CD8-positive, alpha-beta T cell (primary cell): ENCODE measurements at regions of chr6 and their contacts with region 1.

Region 1: GRCh38 chr6:166999145-166999883 is at the start of gene CEP43:
- DNase-seq: peak; percentile 80 to 95 (median 87)
- ATAC-seq: peak; percentile 92
- H3K4me3 ChIP-seq: peak within 1 kb of the TSS; percentile 63 to 99
- H3K4me3 Mint-ChIP-seq: peak within 1 kb of the TSS; percentile 86
- H3K27ac ChIP-seq: peak within 1 kb of the TSS; percentile 28 to 43
- H3K27ac Mint-ChIP-seq: peak within 1 kb of the TSS; percentile 77
- H3K4me1 ChIP-seq: peaks cover 20% of the 10 kb centered on the region
- H3K4me1 Mint-ChIP-seq: peaks cover 28% of the 10 kb centered on the region
- H3K27me3 ChIP-seq: no peaks in the 10 kb centered on the region
- H3K27me3 Mint-ChIP-seq: no peaks in the 10 kb centered on the region
- CTCF ChIP-seq: no peak
- total RNA-seq, gene CEP43: 5.7 to 8.7 TPM

Region 2: GRCh38 chr6:166419286-166419685 is 580.0 kb before region 1 on chr6:
- CTCF ChIA-PET with region 1: no interaction called
- POLR2A ChIA-PET with region 1: no interaction called
- intact Hi-C with region 1: loop called in 1 of 2 experiments (anchors 5 kb)
- DNase-seq: peak in 8 of 9 experiments; percentile 50 to 82 (median 72)
- ATAC-seq: peak; percentile 35
- H3K4me3 ChIP-seq: no peak overlapping the region
- H3K4me3 Mint-ChIP-seq: peak overlapping the region; percentile 50
- H3K27ac ChIP-seq: peak overlapping the region; percentile 15 to 58
- H3K27ac Mint-ChIP-seq: peak overlapping the region; percentile 92
- H3K4me1 ChIP-seq: peaks cover 62% of the 10 kb centered on the region
- H3K4me1 Mint-ChIP-seq: peaks cover 75% of the 10 kb centered on the region
- H3K27me3 ChIP-seq: no peaks in the 10 kb centered on the region
- H3K27me3 Mint-ChIP-seq: no peaks in the 10 kb centered on the region
- CTCF ChIP-seq: no peak

Region 3: DNA sequence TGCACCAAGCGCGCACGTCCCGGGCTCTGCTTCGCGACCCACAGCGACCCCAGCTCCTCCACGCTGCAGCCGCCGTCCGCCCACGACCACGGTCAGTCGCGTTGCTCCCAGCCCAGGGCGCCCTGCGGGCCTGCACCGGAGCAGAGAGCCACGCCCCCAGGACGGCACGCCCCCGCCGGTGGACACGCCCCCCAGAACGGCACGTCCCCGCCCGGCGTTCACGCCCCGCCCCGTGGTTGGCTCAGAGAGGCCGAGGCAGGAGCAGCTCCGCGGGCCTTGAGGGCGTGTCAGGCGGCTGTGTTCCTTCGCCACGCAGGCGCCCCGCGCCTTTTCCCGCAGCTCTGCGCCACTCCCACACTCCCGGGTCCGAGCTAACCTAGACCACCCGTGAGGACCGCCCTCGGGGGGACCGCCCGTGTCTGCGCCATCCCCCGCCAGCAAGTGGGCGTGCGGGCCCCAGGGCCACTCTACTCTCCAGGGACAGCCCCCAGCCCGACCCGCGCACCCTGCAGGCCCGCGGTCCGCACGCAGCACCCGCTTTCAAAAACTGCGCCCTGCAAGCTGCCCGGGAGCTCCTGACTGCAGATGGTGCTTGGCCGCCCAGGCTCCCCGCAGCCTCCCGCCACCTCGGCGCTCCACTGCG is 42.7 kb before region 1 on chr6 and contains the start of gene RNASET2:
- CTCF ChIA-PET with region 1: interaction called, 3 read pairs
- POLR2A ChIA-PET with region 1: interaction called, 16 read pairs
- intact Hi-C with region 1: loop called (anchors 1 kb)
- DNase-seq: peak; percentile 96 to 100 (median 99)
- ATAC-seq: peak; percentile 87
- H3K4me3 ChIP-seq: peak within 1 kb of the TSS; percentile 74 to 75
- H3K4me3 Mint-ChIP-seq: peak within 1 kb of the TSS; percentile 93
- H3K27ac ChIP-seq: peak within 1 kb of the TSS; percentile 81 to 86
- H3K27ac Mint-ChIP-seq: peak within 1 kb of the TSS; percentile 98
- H3K4me1 ChIP-seq: peaks cover 68% of the 10 kb centered on the region
- H3K4me1 Mint-ChIP-seq: peaks cover 70% of the 10 kb centered on the region
- H3K27me3 ChIP-seq: no peaks in the 10 kb centered on the region
- H3K27me3 Mint-ChIP-seq: no peaks in the 10 kb centered on the region
- CTCF ChIP-seq: no peak
- total RNA-seq, gene RNASET2: 93.1 to 98.9 TPM

Region 4: GRCh38 chr6:167047554-167047953 is 48.2 kb after region 1 on chr6:
- CTCF ChIA-PET with region 1: no interaction called
- POLR2A ChIA-PET with region 1: no interaction called
- intact Hi-C with region 1: loop called in 1 of 2 experiments (anchors 5 kb)
- DNase-seq: peak in 6 of 9 experiments; percentile 22 to 59 (median 47)
- ATAC-seq: peak; percentile 80
- H3K4me3 ChIP-seq: peak overlapping the region in 1 of 2 experiments; percentile 3
- H3K4me3 Mint-ChIP-seq: peak overlapping the region; percentile 73
- H3K27ac ChIP-seq: no peak overlapping the region
- H3K27ac Mint-ChIP-seq: peak overlapping the region; percentile 62
- H3K4me1 ChIP-seq: peaks cover 12% of the 10 kb centered on the region
- H3K4me1 Mint-ChIP-seq: peaks cover 25% of the 10 kb centered on the region
- H3K27me3 ChIP-seq: no peaks in the 10 kb centered on the region
- H3K27me3 Mint-ChIP-seq: no peaks in the 10 kb centered on the region
- CTCF ChIP-seq: no peak

Region 5: DNA sequence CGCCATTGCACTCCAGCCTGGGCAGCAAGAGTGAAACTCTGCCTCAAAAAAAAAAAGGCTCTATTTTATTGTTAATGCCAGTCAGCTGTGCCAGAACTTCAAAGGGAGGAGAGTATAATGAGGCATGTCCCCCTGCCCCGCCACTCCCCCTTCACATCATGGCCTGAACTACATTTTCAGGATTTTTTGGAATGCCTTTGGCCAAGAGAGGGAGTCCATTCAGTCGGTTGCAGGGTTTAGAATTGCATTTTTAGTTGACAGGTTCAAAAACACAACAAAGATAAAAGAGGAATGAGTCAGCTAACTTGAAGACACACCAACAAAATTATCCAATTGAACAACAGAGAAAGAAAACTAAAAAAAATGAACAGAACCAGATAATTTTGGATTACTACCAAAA is 58.9 kb after region 1 on chr6:
- CTCF ChIA-PET with region 1: no interaction called
- POLR2A ChIA-PET with region 1: no interaction called
- intact Hi-C with region 1: no loop called
- DNase-seq: no peak
- ATAC-seq: no peak
- H3K4me3 ChIP-seq: no peak overlapping the region
- H3K4me3 Mint-ChIP-seq: no peak overlapping the region
- H3K27ac ChIP-seq: no peak overlapping the region
- H3K27ac Mint-ChIP-seq: no peak overlapping the region
- H3K4me1 ChIP-seq: peaks cover 8% of the 10 kb centered on the region
- H3K4me1 Mint-ChIP-seq: peaks cover 31% of the 10 kb centered on the region
- H3K27me3 ChIP-seq: no peaks in the 10 kb centered on the region
- H3K27me3 Mint-ChIP-seq: no peaks in the 10 kb centered on the region
- CTCF ChIP-seq: no peak

Region 6: GRCh38 chr6:167079853-167080297 is 80.6 kb after region 1 on chr6:
- CTCF ChIA-PET with region 1: no interaction called
- POLR2A ChIA-PET with region 1: no interaction called
- intact Hi-C with region 1: no loop called
- DNase-seq: peak in 4 of 9 experiments; percentile 27 to 63 (median 52)
- ATAC-seq: peak; percentile 89
- H3K4me3 ChIP-seq: no peak overlapping the region
- H3K4me3 Mint-ChIP-seq: no peak overlapping the region
- H3K27ac ChIP-seq: no peak overlapping the region
- H3K27ac Mint-ChIP-seq: no peak overlapping the region
- H3K4me1 ChIP-seq: no peaks in the 10 kb centered on the region
- H3K4me1 Mint-ChIP-seq: peaks cover 3% of the 10 kb centered on the region
- H3K27me3 ChIP-seq: no peaks in the 10 kb centered on the region
- H3K27me3 Mint-ChIP-seq: no peaks in the 10 kb centered on the region
- CTCF ChIP-seq: no peak

Region 7: GRCh38 chr6:167141667-167142432 is 142.5 kb after region 1 on chr6:
- CTCF ChIA-PET with region 1: interaction called, 14 read pairs
- POLR2A ChIA-PET with region 1: interaction called, 3 read pairs
- intact Hi-C with region 1: loop called (anchors 2 to 5 kb)
- DNase-seq: peak in 7 of 9 experiments; percentile 7 to 66 (median 41)
- ATAC-seq: peak; percentile 71
- H3K4me3 ChIP-seq: no peak overlapping the region
- H3K4me3 Mint-ChIP-seq: no peak overlapping the region
- H3K27ac ChIP-seq: no peak overlapping the region
- H3K27ac Mint-ChIP-seq: no peak overlapping the region
- H3K4me1 ChIP-seq: no peaks in the 10 kb centered on the region
- H3K4me1 Mint-ChIP-seq: peaks cover 16% of the 10 kb centered on the region
- H3K27me3 ChIP-seq: no peaks in the 10 kb centered on the region
- H3K27me3 Mint-ChIP-seq: peaks cover 8% of the 10 kb centered on the region
- CTCF ChIP-seq: peak; percentile 72

Region 8: GRCh38 chr6:167329014-167329413 is 329.7 kb after region 1 on chr6:
- CTCF ChIA-PET with region 1: no interaction called
- POLR2A ChIA-PET with region 1: no interaction called
- intact Hi-C with region 1: no loop called
- DNase-seq: no peak
- ATAC-seq: no peak
- H3K4me3 ChIP-seq: no peak overlapping the region
- H3K4me3 Mint-ChIP-seq: no peak overlapping the region
- H3K27ac ChIP-seq: no peak overlapping the region
- H3K27ac Mint-ChIP-seq: no peak overlapping the region
- H3K4me1 ChIP-seq: no peaks in the 10 kb centered on the region
- H3K4me1 Mint-ChIP-seq: no peaks in the 10 kb centered on the region
- H3K27me3 ChIP-seq: peaks cover 0 to 2% of the 10 kb centered on the region in 2 experiments
- H3K27me3 Mint-ChIP-seq: no peaks in the 10 kb centered on the region
- CTCF ChIP-seq: no peak